ENCODE measurements at regions of chr10 and their contacts with region 1.

Region 1: GRCh38 chr10:5623081-5623748 is 43.2 kb downstream of the ASB13 start:
- DNase-seq: peak; percentile 74 to 82 (median 81)
- H3K4me3 ChIP-seq: peak overlapping the region in 1 of 7 experiments; percentile 25
- H3K27ac ChIP-seq: no peak overlapping the region
- H3K4me1 ChIP-seq: peaks cover 0 to 5% (median under 1%) of the 10 kb centered on the region in 4 experiments
- H3K27me3 ChIP-seq: no peaks in the 10 kb centered on the region

Region 2: DNA sequence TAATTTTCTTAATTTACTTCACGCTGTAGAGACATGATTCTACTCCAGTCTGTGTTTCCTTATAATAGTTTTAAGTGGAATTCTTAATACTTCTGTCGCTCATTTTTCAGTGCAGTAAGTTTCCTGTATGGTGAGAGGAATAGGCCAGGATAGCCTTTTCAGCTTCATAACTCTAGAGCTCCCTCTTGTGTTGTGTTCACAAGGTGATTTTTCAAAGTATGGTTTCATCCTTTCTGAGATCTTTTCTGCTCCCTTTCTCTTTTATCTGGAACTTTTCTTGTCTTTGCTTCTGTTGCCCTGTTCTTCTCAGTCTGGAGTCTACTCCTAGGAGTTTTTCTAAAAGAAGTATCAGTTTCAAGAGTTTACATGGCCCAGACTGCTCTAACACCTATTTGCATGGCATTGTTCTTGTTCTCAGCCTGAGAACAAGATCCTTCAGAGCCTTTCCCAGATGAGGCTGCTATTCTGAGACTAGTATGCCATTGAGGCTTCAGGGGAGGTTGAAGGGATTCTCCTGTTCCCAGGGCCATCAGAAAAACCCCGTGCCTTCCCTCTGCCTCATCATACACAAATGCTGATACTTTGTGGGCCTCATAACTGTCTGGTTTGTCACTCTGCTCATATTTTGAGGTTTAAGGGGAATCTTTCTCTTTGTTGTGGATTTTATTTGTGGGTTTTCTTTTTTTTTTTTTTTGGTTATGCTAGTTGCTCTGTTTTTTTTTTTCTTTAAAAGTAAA is 189.0 kb before region 1 on chr10:
- CTCF ChIA-PET with region 1: interaction called, 185 read pairs
- POLR2A ChIA-PET with region 1: no interaction called
- DNase-seq: peak; percentile 50 to 67 (median 61)
- H3K4me3 ChIP-seq: no peak overlapping the region
- H3K27ac ChIP-seq: no peak overlapping the region
- H3K4me1 ChIP-seq: peaks cover 0 to 2% (median 0%) of the 10 kb centered on the region in 4 experiments
- H3K27me3 ChIP-seq: no peaks in the 10 kb centered on the region

Region 3: DNA sequence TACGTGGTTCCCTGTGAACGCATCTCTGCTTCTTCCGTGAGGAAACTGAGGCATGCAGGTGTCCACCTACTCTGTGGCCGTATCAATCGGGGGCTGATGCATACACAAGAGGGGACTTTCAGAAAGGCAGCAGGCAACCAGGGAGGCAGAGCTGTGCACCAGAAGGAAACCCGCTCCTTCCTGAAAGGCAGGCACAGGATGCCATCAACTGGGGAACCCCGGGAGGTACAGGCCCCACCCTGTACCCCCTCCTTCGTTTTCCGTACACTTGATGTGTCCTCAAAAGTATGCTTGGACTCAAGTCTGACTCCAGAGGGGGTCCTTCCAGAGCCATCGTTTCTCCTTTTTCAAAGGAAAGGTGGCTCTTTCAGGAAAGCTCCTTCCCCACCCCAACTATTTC is 16.4 kb before region 1 on chr10:
- CTCF ChIA-PET with region 1: interaction called, 10 read pairs
- POLR2A ChIA-PET with region 1: no interaction called
- DNase-seq: peak; percentile 37 to 56 (median 51)
- H3K4me3 ChIP-seq: peak overlapping the region in 3 of 7 experiments; percentile 11 to 56 (median 16)
- H3K27ac ChIP-seq: no peak overlapping the region
- H3K4me1 ChIP-seq: peaks cover 0 to 13% (median 7%) of the 10 kb centered on the region in 4 experiments
- H3K27me3 ChIP-seq: no peaks in the 10 kb centered on the region

Region 4: GRCh38 chr10:5813287-5814109 is 190.3 kb after region 1 on chr10 and contains the start of gene GDI2:
- CTCF ChIA-PET with region 1: no interaction called
- POLR2A ChIA-PET with region 1: no interaction called
- DNase-seq: peak; percentile 96 to 98 (median 98)
- H3K4me3 ChIP-seq: peak within 1 kb of the TSS; percentile 85 to 97 (median 95)
- H3K27ac ChIP-seq: peak within 1 kb of the TSS; percentile 89 to 96
- H3K4me1 ChIP-seq: peaks cover 33 to 56% (median 42%) of the 10 kb centered on the region in 4 experiments
- H3K27me3 ChIP-seq: no peaks in the 10 kb centered on the region

Measured in common myeloid progenitor, CD34-positive (primary cell).